ENCODE measurements at regions of chr3 and their contacts with region 1.

Region 1: GRCh38 chr3:99128725-99129505 is 227.4 kb upstream of the DCBLD2 start:
- DNase-seq: peak; percentile 96
- ATAC-seq: peak; percentile 97
- H3K4me3 ChIP-seq: no peak overlapping the region
- H3K27ac ChIP-seq: peak overlapping the region; percentile 74
- H3K4me1 ChIP-seq: peaks cover 22% of the 10 kb centered on the region
- H3K27me3 ChIP-seq: no peaks in the 10 kb centered on the region
- CTCF ChIP-seq: no peak

Region 2: GRCh38 chr3:99084826-99085225 is 44.1 kb before region 1 on chr3:
- CTCF ChIA-PET with region 1: no interaction called
- POLR2A ChIA-PET with region 1: no interaction called
- intact Hi-C with region 1: loop called (anchors 2 kb)
- DNase-seq: peak; percentile 95
- ATAC-seq: peak; percentile 89
- H3K4me3 ChIP-seq: peak overlapping the region; percentile 53
- H3K27ac ChIP-seq: peak overlapping the region; percentile 92
- H3K4me1 ChIP-seq: peaks cover 49% of the 10 kb centered on the region
- H3K27me3 ChIP-seq: no peaks in the 10 kb centered on the region
- CTCF ChIP-seq: no peak

Region 3: DNA sequence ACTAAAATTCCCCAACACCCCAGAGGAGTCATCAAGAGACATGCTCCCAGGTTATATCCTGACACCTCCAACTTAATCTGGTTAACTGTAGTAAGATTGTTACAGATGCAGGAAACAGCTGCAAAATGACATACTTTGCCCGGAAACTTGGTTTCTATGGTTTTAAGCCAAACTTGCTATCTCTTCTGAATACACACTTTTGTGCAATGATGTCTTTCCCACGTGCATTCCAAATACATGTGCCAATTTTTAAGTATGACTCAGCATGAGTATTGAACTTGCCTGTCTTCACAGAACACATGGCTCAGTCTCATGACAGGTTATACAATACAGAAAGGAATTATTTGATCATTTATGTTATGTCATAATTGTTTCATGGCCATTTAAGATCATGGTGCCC is 20.4 kb before region 1 on chr3:
- CTCF ChIA-PET with region 1: no interaction called
- POLR2A ChIA-PET with region 1: no interaction called
- intact Hi-C with region 1: loop called (anchors 1 kb)
- DNase-seq: peak; percentile 95
- ATAC-seq: peak; percentile 94
- H3K4me3 ChIP-seq: no peak overlapping the region
- H3K27ac ChIP-seq: peak overlapping the region; percentile 17
- H3K4me1 ChIP-seq: peaks cover 18% of the 10 kb centered on the region
- H3K27me3 ChIP-seq: no peaks in the 10 kb centered on the region
- CTCF ChIP-seq: no peak

Region 4: GRCh38 chr3:99269606-99270351 is 140.9 kb after region 1 on chr3:
- CTCF ChIA-PET with region 1: no interaction called
- POLR2A ChIA-PET with region 1: no interaction called
- intact Hi-C with region 1: no loop called
- DNase-seq: no peak
- ATAC-seq: no peak
- H3K4me3 ChIP-seq: no peak overlapping the region
- H3K27ac ChIP-seq: no peak overlapping the region
- H3K4me1 ChIP-seq: no peaks in the 10 kb centered on the region
- H3K27me3 ChIP-seq: no peaks in the 10 kb centered on the region
- CTCF ChIP-seq: no peak

Region 5: GRCh38 chr3:99627062-99627826 is 498.3 kb after region 1 on chr3:
- CTCF ChIA-PET with region 1: no interaction called
- POLR2A ChIA-PET with region 1: no interaction called
- intact Hi-C with region 1: loop called (anchors 10 kb)
- DNase-seq: peak; percentile 78
- ATAC-seq: peak; percentile 62
- H3K4me3 ChIP-seq: no peak overlapping the region
- H3K27ac ChIP-seq: peak overlapping the region; percentile 5; the same call in 1 of the 2 replicates
- H3K4me1 ChIP-seq: peaks cover 54% of the 10 kb centered on the region
- H3K27me3 ChIP-seq: no peaks in the 10 kb centered on the region
- CTCF ChIP-seq: peak; percentile 51

Measured in PC-3 (cell line).